ENCODE measurements at regions of chr3 and their contacts with region 1.

Region 1: GRCh38 chr3:10322352-10322710 is 1.4 kb upstream of the SEC13 start:
- DNase-seq: peak; percentile 31
- H3K4me3 Mint-ChIP-seq: no peak overlapping the region
- H3K27ac Mint-ChIP-seq: no peak overlapping the region
- H3K4me1 Mint-ChIP-seq: peaks cover 26% of the 10 kb centered on the region
- H3K27me3 Mint-ChIP-seq: peaks cover 18% of the 10 kb centered on the region

Region 2: GRCh38 chr3:10142707-10143566 is 179.4 kb before region 1 on chr3:
- CTCF ChIA-PET with region 1: interaction called, 3 read pairs
- POLR2A ChIA-PET with region 1: interaction called, 10 read pairs
- DNase-seq: peak; percentile 32
- H3K4me3 Mint-ChIP-seq: peak overlapping the region; percentile 85
- H3K27ac Mint-ChIP-seq: peak overlapping the region; percentile 96
- H3K4me1 Mint-ChIP-seq: peaks cover 42% of the 10 kb centered on the region
- H3K27me3 Mint-ChIP-seq: no peaks in the 10 kb centered on the region

Region 3: DNA sequence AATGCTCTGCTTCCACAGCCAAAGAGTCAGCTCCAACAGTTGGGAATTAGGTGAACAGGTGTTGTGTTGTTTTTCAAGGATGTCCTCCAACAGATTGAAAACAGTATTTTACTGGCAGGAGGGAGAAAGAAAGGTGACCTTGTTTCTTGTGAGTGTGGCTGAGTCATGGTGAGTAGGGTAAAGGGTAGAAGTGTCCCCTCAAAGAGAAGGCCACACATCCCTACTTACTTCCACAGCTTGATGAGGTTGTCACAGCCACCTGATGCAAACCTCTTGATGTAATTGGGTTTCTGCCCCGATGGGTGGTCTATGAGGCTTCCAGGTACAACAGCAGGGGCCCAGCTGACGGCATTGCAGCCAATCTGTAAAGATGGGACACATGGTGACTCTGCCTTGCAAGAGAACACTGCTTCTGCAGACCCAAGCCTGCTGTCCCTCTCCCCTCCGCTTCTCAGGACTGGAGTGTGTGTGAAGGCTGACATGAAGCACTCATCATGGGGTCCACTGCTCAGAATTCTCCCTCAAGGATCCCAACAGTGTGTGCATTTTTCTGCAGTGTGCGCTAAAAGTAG is 16.9 kb before region 1 on chr3:
- CTCF ChIA-PET with region 1: interaction called, 8 read pairs
- POLR2A ChIA-PET with region 1: interaction called, 10 read pairs
- DNase-seq: no peak
- H3K4me3 Mint-ChIP-seq: no peak overlapping the region
- H3K27ac Mint-ChIP-seq: no peak overlapping the region
- H3K4me1 Mint-ChIP-seq: peaks cover 2% of the 10 kb centered on the region
- H3K27me3 Mint-ChIP-seq: no peaks in the 10 kb centered on the region

Region 4: GRCh38 chr3:10337323-10338163 is 15.2 kb after region 1 on chr3:
- CTCF ChIA-PET with region 1: interaction called, 13 read pairs
- POLR2A ChIA-PET with region 1: no interaction called
- DNase-seq: no peak
- H3K4me3 Mint-ChIP-seq: no peak overlapping the region
- H3K27ac Mint-ChIP-seq: no peak overlapping the region
- H3K4me1 Mint-ChIP-seq: peaks cover 4% of the 10 kb centered on the region
- H3K27me3 Mint-ChIP-seq: peaks cover 2% of the 10 kb centered on the region

Region 5: DNA sequence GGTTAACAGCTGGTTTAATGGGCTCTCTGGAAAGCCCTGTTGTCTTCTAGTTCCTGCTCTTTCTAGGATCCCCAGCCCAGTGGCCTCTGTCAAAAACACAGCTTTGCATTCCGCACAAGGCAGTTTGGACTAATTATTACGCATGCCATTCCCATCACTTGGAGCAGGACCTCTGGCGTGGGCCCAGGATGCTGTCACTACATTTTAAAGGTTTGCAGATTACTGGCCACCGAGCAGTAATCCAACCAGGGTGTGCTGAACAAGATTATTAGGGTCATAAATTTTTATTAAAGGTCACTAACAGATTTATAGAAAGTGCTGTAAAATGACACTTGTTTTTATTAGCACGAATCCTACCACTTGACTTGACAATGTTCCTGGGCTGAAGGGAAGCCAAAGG is 350.1 kb after region 1 on chr3:
- CTCF ChIA-PET with region 1: no interaction called
- POLR2A ChIA-PET with region 1: no interaction called
- DNase-seq: no peak
- H3K4me3 Mint-ChIP-seq: no peak overlapping the region
- H3K27ac Mint-ChIP-seq: no peak overlapping the region
- H3K4me1 Mint-ChIP-seq: peaks cover 1% of the 10 kb centered on the region
- H3K27me3 Mint-ChIP-seq: peaks cover 8% of the 10 kb centered on the region

Measured in activated CD4-positive, alpha-beta memory T cell treated with anti-CD3 and anti-CD28 coated beads, Interleukin-2, amount 10 ng/mL, durations not matched to agents 7 days and 5 days (primary cell).